SK-N-SH (cell line): ENCODE measurements at regions of chr20 and their contacts with region 1.

Region 1: DNA sequence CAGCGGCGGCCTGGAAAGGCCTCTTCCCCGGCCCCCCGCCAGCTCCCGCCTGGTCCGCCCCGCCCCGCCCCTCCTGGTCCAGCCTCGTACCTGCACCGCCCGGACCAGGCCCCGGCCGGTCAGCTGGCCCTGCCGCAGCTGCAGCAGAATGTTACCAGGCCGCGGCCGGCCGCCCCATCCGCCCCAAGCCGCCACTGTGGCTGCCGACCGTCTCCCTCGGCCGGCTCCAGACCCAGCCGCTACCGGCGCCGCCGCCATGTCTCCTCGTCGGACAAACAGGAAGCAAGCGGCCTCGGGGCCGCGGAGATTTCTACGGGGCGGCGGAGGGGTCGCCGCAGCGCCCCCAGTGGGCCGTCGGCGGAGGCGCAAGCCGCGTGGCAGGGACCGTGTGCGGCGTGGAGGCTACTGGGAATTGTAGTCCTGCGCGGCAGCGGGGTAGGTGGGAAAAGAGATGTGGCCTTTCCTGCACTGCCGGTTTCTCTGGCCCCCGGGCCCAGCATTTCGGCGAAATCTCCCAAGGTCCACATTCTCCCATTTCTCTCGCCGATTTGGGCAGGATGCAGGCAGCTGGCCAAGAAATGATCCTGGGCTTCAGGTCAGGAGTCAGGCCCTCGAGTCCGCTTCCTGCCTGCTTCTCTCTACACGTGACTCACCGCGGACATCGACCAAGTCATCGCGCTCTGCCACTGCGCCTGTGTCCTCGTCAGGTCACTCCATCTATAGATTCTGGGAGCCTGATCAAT is at the start of gene TRPC4AP:
- DNase-seq: peak; percentile 94
- H3K4me3 ChIP-seq: peak within 1 kb of the TSS; percentile 76 to 77
- H3K27ac ChIP-seq: peak within 1 kb of the TSS; percentile 68 to 83
- H3K4me1 ChIP-seq: peaks cover 8 to 15% of the 10 kb centered on the region in 2 experiments; a peak in 2 of 4 replicates
- H3K27me3 ChIP-seq: no peaks in the 10 kb centered on the region
- CTCF ChIP-seq: peak; percentile 90
- EP300 ChIP-seq: peak in 1 of 2 experiments; percentile 39; a peak in 1 of 4 replicates
- RAD21 ChIP-seq: peak; percentile 55
- polyA plus RNA-seq, gene TRPC4AP: 57.4 and 69.6 TPM in 2 replicates

Region 2: GRCh38 chr20:34753706-34754461 is 338.8 kb before region 1 on chr20:
- CTCF ChIA-PET with region 1: no interaction called
- POLR2A ChIA-PET with region 1: no interaction called
- DNase-seq: no peak
- H3K4me3 ChIP-seq: no peak overlapping the region
- H3K27ac ChIP-seq: no peak overlapping the region
- H3K4me1 ChIP-seq: no peaks in the 10 kb centered on the region
- H3K27me3 ChIP-seq: no peaks in the 10 kb centered on the region
- CTCF ChIP-seq: no peak; the same call in 1 of the 2 replicates
- EP300 ChIP-seq: no peak
- RAD21 ChIP-seq: no peak

Region 3: GRCh38 chr20:35066194-35066593 is 26.5 kb before region 1 on chr20:
- CTCF ChIA-PET with region 1: interaction called, 12 read pairs
- POLR2A ChIA-PET with region 1: no interaction called
- DNase-seq: no peak
- H3K4me3 ChIP-seq: no peak overlapping the region
- H3K27ac ChIP-seq: no peak overlapping the region
- H3K4me1 ChIP-seq: peaks cover 0 to 13% of the 10 kb centered on the region in 2 experiments; a peak in 1 of 4 replicates
- H3K27me3 ChIP-seq: no peaks in the 10 kb centered on the region
- CTCF ChIP-seq: no peak
- EP300 ChIP-seq: no peak
- RAD21 ChIP-seq: no peak

Region 4: GRCh38 chr20:35117196-35117595 is 24.5 kb after region 1 on chr20:
- CTCF ChIA-PET with region 1: interaction called, 12 read pairs
- POLR2A ChIA-PET with region 1: no interaction called
- DNase-seq: no peak
- H3K4me3 ChIP-seq: no peak overlapping the region
- H3K27ac ChIP-seq: peak overlapping the region in 1 of 2 experiments; percentile 72; a peak in 2 of 4 replicates
- H3K4me1 ChIP-seq: peaks cover 0 to 19% of the 10 kb centered on the region in 2 experiments; a peak in 1 of 4 replicates
- H3K27me3 ChIP-seq: no peaks in the 10 kb centered on the region
- CTCF ChIP-seq: no peak
- EP300 ChIP-seq: no peak
- RAD21 ChIP-seq: no peak

Region 5: GRCh38 chr20:35146920-35147574 is 54.4 kb after region 1 on chr20 and contains the start of gene EDEM2:
- CTCF ChIA-PET with region 1: interaction called, 27 read pairs
- POLR2A ChIA-PET with region 1: no interaction called
- DNase-seq: peak; percentile 95
- H3K4me3 ChIP-seq: peak within 1 kb of the TSS; percentile 89 to 94
- H3K27ac ChIP-seq: peak within 1 kb of the TSS; percentile 64 to 80
- H3K4me1 ChIP-seq: peaks cover 0 to 7% of the 10 kb centered on the region in 2 experiments; a peak in 2 of 4 replicates
- H3K27me3 ChIP-seq: no peaks in the 10 kb centered on the region
- CTCF ChIP-seq: no peak
- EP300 ChIP-seq: peak in 1 of 2 experiments; percentile 43; a peak in 1 of 4 replicates
- RAD21 ChIP-seq: no peak
- polyA plus RNA-seq, gene EDEM2: 30.4 and 34.3 TPM in 2 replicates

Region 6: DNA sequence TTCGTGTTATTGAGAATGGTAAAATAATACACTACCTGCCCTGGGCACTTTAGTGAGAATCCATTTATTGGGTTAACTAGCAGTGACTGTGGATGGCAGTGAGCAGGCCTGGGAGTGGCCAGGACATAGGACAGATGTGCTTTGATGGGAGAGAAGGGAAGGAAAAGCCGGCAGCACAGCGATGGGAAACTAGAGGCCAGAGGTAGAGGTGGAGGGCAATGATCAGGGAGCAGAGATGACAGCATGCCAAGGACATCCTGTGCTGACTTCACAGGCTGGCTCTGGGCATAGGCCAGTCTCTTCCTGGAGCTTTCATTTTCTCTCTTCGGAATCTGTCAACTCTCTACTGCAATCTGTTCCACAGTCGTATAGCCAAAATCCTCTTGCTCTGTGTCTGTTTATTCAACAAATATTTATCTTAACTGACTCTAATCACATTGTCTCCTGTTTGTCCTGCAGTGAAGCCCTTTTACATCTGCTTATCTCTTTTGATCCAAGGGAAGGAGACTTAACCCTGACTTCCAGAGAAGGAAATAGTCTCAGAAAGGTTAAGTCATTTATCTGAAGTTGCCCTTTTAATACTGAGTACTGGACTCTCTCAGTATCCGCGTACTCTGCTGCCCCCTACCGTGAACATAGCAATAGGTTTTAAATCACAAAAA is 115.4 kb after region 1 on chr20:
- CTCF ChIA-PET with region 1: interaction called, 64 read pairs
- POLR2A ChIA-PET with region 1: no interaction called
- DNase-seq: peak; percentile 70
- H3K4me3 ChIP-seq: peak overlapping the region in 1 of 2 experiments; percentile 41; a peak in 1 of 4 replicates
- H3K27ac ChIP-seq: peak overlapping the region in 1 of 2 experiments; percentile 31; a peak in 2 of 4 replicates
- H3K4me1 ChIP-seq: peaks cover 0 to 2% of the 10 kb centered on the region in 2 experiments; a peak in 1 of 4 replicates
- H3K27me3 ChIP-seq: no peaks in the 10 kb centered on the region
- CTCF ChIP-seq: peak; percentile 90
- EP300 ChIP-seq: no peak
- RAD21 ChIP-seq: peak; percentile 99